Dendritic cell treated with granulocyte-macrophage colony-stimulating factor and Interleukin-4, amounts not matched to agents 40 ng/mL and 50 ng/mL, for 4 days (primary cell): ENCODE measurements at regions of chrX and their contacts with region 1.

Region 1: DNA sequence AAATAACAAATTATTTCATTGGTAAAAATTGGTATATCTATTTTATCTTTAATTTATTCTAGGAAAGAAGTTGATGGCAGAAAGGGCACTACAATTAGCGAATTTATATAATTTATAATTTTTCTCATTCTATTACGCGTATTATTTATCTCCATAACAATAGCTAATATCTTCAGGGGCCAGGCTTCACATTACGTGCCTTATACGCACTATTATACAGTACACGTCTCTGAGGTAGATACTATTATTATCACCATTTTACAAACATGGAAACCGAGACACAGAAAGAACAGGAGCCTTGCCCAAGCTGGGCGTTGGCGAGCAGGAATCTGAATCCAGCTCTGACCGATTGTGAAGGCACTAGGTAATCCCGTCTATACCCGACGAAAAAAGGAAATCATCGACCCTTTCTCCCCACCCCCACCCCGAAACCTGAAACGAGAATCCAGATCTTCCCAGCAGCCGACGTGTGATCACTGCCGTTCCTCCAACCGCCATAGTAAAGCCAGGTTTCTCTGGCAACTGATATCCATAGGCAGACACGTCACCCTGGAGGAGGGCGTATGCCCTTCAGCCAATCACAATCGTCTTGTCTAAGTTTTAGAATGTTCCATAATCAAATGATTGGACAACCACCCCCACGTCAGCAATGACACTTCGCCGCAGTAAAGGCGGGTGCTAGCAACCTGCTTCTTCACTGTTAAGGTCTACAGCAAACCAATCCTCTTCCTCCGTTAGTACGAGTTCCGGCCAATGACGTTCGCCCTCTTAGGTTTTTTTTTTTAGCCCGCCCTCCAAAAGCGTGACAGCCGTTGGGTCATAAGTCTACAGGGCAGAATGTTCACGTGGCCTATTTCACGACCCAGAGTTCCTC is at the start of gene MORF4L2:
- H3K4me3 Mint-ChIP-seq: peak within 1 kb of the TSS; percentile 64
- H3K27ac Mint-ChIP-seq: no peak within 1 kb of the TSS
- H3K4me1 Mint-ChIP-seq: peaks cover 4% of the 10 kb centered on the region
- H3K27me3 Mint-ChIP-seq: no peaks in the 10 kb centered on the region

Region 2: DNA sequence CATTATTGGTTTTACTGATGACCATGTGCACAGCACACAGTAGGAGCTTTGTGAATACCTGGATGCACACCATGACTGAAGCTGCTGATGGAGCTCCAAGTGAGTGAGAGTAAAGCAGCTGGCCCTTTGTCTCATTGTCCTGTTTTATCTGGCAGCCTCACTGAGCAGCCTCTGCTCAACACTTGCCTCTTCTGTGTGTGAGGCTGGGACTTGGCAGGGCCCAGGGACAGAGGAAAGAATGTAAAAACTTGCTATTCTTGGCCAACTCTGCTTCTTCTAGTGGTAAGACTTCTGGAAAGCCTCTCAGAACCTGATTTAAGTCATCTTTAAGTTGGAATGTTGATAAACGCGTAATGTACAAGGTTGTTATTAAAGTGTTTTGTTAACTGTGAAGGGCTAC is 683.9 kb before region 1 on chrX:
- intact Hi-C with region 1: no loop called
- H3K4me3 Mint-ChIP-seq: no peak overlapping the region
- H3K27ac Mint-ChIP-seq: no peak overlapping the region
- H3K4me1 Mint-ChIP-seq: no peaks in the 10 kb centered on the region
- H3K27me3 Mint-ChIP-seq: no peaks in the 10 kb centered on the region

Region 3: GRCh38 chrX:103533511-103534216 is 152.8 kb before region 1 on chrX:
- intact Hi-C with region 1: loop called (anchors 10 kb)
- H3K4me3 Mint-ChIP-seq: peak overlapping the region; percentile 62
- H3K27ac Mint-ChIP-seq: no peak overlapping the region
- H3K4me1 Mint-ChIP-seq: peaks cover 6% of the 10 kb centered on the region
- H3K27me3 Mint-ChIP-seq: no peaks in the 10 kb centered on the region

Region 4: DNA sequence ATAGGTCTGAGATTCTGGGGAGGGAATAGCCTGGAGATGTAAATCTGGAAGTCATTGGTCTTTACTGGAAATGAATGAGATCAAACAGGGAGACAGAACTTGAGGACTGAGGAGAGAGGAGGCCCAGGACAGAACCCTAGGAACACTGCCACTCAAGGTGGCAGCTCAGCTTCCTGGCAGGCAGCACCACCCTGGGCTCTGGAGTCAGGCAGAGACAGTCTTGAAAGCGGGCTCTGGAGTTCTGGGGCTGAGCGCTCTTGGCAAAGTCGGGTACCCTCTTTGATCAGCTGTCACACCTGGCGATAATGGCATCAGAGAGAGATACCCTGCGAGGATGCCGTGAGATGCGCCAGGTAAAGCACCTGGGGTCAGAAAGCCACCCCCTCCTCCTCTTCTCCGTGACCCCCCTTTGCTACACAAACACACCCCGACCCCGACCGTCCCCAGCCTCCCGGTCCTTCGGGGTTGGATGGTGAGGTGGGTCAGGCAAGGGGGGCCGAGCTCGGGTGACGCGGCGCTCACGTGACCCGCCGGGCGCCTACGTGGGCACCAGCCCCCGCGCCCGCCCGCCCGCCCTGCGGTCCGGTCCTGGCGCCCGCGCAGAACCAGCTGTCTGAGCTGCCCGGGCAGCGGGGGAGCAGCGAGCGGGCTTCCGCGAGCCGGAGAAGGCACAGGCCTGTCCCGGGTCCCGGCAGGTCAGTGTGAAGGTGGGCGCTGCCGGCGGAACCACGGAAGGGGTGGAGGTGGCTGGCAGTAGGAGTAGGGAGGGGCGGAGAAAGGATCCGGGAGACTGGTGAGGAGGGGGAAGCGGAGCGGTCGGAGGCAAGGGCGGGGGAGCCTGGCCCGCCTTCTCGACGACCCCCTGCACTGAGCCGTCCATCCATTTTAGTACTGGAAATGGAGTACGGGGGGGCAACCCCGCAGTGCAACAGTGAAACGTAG is 78.8 kb before region 1 on chrX and contains the start of gene TCEAL3:
- intact Hi-C with region 1: loop called (anchors 5 kb)
- H3K4me3 Mint-ChIP-seq: peak within 1 kb of the TSS; percentile 83
- H3K27ac Mint-ChIP-seq: peak within 1 kb of the TSS; percentile 84
- H3K4me1 Mint-ChIP-seq: peaks cover 17% of the 10 kb centered on the region
- H3K27me3 Mint-ChIP-seq: peaks cover 4% of the 10 kb centered on the region

Region 5: DNA sequence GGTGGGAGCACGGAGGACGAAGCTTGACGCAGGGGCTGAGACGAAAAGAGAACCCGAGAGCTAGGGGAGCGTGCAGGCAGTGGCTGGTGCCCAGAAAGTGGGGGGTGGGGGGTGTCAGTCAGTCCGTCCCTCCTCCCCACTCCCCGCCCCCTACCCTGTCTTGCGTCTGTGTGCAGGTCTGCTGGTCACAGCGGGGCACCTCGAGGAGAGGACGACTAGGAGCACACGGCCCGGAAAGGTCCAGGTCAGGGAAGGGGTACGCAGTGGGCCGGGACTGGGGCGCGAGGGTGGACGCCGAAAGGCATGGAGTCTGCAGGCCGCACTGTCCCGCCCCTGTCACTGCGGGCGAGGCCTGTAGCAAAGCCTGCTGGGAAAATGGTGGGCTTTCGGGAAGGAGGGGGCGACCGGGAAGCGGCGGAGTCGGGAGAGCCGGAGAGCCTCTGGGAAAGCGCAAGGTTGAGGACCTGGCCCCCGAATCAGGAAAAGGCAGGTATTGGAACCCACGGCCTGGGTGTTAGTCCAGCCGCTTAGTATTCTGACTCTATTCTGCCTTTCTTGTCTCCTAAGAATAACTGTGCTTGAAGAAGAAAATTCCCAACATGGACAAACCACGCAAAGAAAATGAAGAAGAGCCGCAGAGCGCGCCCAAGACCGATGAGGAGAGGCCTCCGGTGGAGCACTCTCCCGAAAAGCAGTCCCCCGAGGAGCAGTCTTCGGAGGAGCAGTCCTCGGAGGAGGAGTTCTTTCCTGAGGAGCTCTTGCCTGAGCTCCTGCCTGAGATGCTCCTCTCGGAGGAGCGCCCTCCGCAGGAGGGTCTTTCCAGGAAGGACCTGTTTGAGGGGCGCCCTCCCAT is 56.9 kb before region 1 on chrX:
- intact Hi-C with region 1: loop called (anchors 5 kb)
- H3K4me3 Mint-ChIP-seq: peak overlapping the region; percentile 94
- H3K27ac Mint-ChIP-seq: peak overlapping the region; percentile 96
- H3K4me1 Mint-ChIP-seq: peaks cover 15% of the 10 kb centered on the region
- H3K27me3 Mint-ChIP-seq: no peaks in the 10 kb centered on the region

Region 6: GRCh38 chrX:103742339-103742738 is 55.9 kb after region 1 on chrX:
- intact Hi-C with region 1: no loop called
- H3K4me3 Mint-ChIP-seq: no peak overlapping the region
- H3K27ac Mint-ChIP-seq: no peak overlapping the region
- H3K4me1 Mint-ChIP-seq: no peaks in the 10 kb centered on the region
- H3K27me3 Mint-ChIP-seq: no peaks in the 10 kb centered on the region

Region 7: GRCh38 chrX:103817502-103817901 is 131.1 kb after region 1 on chrX:
- intact Hi-C with region 1: loop called (anchors 2 kb)
- H3K4me3 Mint-ChIP-seq: no peak overlapping the region
- H3K27ac Mint-ChIP-seq: no peak overlapping the region
- H3K4me1 Mint-ChIP-seq: no peaks in the 10 kb centered on the region
- H3K27me3 Mint-ChIP-seq: peaks cover 4% of the 10 kb centered on the region

Region 8: DNA sequence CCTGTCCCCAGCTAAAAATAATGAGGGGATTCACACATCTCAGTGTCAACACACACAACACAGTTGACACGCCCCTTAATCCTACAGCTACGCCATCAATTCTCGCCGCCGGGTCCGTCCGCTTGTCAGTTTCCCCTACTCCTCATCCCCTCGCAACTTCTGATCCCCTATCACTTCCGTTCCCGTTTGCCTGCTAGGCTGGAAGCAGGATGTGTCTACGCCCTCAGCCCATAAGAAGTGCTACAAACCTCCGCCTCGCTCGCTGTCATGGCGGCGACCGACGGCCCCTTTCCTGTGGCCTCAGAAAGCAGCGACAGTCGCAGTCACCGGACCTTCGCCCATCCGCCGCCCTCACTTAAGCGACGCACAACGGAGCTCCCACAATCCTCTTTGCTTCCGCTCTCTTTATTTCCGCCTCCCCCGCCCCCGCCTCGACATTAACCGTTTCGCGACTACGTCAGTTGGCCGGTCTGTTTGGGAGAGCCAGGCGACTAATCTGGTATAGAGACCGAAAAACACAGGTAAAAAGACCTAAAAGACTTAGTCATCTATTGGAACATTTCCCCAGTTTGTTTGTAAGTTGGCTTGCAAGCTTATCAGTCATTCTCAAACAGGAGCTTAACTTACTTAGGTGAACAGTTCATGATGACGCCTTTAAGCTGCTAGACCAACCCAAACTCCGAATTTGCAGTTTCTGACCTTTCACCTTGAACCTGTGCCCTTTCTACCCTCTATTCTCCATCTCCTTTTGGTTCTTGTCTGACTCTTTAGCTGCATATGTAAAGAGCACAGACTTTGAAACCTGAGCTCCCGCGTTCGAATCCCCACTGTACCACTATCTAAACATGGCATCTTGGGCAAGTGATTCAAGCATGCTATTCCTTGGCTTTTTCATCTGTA is 470.4 kb after region 1 on chrX and contains the start of gene SLC25A53:
- intact Hi-C with region 1: loop called (anchors 10 kb)
- H3K4me3 Mint-ChIP-seq: peak within 1 kb of the TSS; percentile 94
- H3K27ac Mint-ChIP-seq: peak within 1 kb of the TSS; percentile 98
- H3K4me1 Mint-ChIP-seq: peaks cover 5% of the 10 kb centered on the region
- H3K27me3 Mint-ChIP-seq: no peaks in the 10 kb centered on the region